ENCODE measurements at regions of chr9 and their contacts with region 1.

Region 1: DNA sequence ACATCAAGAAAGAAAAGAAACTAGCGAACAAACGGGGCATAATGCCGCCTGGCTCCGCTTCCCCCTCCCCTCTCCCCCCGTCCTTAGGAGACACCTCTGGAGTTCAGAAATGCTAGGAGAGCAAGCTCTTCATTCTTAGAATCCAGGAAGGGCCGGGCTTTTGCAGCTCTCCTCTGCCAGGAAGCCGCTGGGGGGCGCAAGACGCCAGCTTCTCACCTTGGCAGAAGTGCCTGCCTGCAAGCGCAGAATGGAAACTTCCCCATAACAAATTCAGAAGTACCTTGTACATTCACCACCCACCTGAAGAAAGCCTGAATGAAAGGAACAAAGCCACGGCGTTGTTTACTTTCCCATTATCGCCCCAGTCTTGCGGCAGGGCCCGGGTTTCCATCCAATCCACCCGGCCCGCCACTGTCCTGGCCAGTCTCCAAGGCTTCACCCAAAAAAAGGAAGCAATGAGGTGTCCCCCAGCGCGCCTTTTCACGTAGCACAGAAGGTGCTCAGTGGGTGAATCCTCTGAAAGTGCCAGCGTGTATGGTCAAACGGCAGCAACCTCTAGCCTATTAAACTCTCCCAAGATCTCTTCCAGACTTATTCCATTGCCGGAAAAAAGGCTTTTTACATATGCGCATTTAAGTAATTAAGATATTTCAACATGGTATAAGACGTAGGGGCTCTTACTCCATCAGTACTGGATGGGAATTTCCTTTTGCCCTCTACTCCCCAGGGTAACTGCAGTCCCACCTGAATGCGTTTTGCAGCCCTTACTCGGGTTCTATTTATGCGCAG is 1.6 kb upstream of the GADD45G start:
- DNase-seq: peak; percentile 84
- H3K4me3 ChIP-seq: no peak overlapping the region
- H3K27ac ChIP-seq: no peak overlapping the region
- H3K4me1 ChIP-seq: peaks cover 13% of the 10 kb centered on the region
- CTCF ChIP-seq: peak; percentile 93

Region 2: GRCh38 chr9:89437000-89437631 is 166.1 kb before region 1 on chr9:
- CTCF ChIA-PET with region 1: no interaction called
- POLR2A ChIA-PET with region 1: no interaction called
- intact Hi-C with region 1: no loop called
- DNase-seq: peak; percentile 74
- H3K4me3 ChIP-seq: no peak overlapping the region
- H3K27ac ChIP-seq: no peak overlapping the region
- H3K4me1 ChIP-seq: peaks cover 86% of the 10 kb centered on the region
- CTCF ChIP-seq: no peak

Region 3: DNA sequence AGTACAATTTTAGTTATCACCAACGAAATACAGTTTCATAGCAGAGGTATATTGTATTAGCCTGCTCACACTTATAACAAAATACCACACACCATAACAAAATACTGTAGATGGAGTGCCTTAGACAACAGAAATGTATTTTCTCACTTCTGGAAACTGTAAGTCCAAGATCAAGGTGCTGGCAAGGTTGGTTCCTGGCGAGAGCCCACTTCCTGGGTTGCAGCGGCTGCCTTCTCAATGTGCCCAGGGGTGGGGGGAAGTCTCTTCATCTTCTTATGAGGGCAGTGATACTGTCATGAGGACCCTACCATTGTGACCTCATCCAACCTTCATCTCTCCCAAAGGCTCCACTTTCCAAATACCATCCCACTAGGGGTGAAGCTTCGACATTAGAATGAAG is 28.9 kb before region 1 on chr9:
- CTCF ChIA-PET with region 1: no interaction called
- POLR2A ChIA-PET with region 1: no interaction called
- intact Hi-C with region 1: no loop called
- DNase-seq: no peak
- H3K4me3 ChIP-seq: no peak overlapping the region
- H3K27ac ChIP-seq: no peak overlapping the region
- H3K4me1 ChIP-seq: no peaks in the 10 kb centered on the region
- CTCF ChIP-seq: no peak

Region 4: DNA sequence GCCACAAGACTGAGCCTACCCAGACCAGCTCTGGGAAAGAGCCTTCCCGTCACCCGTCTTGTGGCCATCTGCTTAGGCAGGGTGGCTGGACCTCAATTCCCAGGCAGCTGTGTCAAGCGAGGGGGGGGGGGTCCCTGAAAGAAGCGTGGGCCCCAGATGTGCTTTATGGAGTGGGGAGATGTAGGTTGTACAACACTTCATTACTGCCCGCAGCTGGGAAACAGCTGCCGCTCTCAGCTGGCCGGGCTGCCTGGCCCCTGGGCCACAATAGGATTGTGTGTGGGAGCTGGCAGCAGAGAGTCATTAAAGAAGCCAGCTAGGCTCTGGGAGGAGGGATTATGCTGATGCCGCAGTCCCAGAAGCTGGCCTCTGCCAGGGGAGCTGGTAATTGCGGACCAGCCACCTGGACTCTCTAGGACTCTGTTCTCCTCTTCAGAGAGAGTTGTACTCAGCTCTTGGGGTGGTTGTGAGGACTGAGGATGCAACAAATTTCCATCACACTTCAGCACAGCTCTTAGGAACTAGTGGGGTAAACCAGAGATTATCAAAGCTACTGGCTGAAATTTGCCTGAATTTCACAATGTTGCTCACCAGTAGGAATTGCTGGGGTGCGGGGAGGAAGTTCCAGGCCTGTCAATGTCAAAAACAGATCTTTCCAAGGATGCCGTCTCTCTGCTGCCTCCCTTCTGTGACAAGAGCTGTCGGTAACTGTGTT is 147.1 kb after region 1 on chr9:
- CTCF ChIA-PET with region 1: no interaction called
- POLR2A ChIA-PET with region 1: no interaction called
- intact Hi-C with region 1: no loop called
- DNase-seq: no peak
- H3K4me3 ChIP-seq: no peak overlapping the region
- H3K27ac ChIP-seq: no peak overlapping the region
- H3K4me1 ChIP-seq: peaks cover 18% of the 10 kb centered on the region
- CTCF ChIP-seq: no peak

Region 5: GRCh38 chr9:89815903-89816573 is 212.9 kb after region 1 on chr9:
- CTCF ChIA-PET with region 1: interaction called, 3 read pairs
- POLR2A ChIA-PET with region 1: no interaction called
- intact Hi-C with region 1: loop called (anchors 5 kb)
- DNase-seq: peak; percentile 56
- H3K4me3 ChIP-seq: no peak overlapping the region
- H3K27ac ChIP-seq: no peak overlapping the region
- H3K4me1 ChIP-seq: peaks cover 23% of the 10 kb centered on the region
- CTCF ChIP-seq: no peak

Region 6: DNA sequence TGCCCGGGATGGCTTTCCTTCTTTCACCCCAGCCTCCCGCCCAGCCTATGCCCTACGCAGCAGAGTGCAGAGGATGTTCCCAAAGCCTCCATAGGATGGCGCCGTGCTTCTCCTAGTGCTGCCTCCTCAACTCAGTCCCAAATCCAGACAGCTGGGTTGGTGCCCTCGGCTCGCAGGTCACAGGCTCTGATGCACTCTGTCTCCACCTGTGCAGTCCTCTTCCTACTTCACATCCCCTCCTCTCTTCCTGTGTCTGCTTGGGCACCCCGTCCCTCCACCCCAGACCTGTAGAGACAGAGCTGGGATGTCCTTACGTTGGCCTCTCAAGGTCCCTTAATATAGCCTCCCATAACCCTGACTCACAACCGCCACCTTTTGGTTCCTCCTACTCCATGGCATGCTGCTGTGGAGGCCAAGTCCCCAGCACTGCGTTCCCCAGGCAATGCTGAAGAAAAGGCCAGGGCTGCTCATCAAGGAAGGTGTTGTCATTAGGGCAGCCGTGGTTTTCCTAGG is 316.1 kb after region 1 on chr9:
- CTCF ChIA-PET with region 1: no interaction called
- POLR2A ChIA-PET with region 1: no interaction called
- intact Hi-C with region 1: loop called (anchors 1 kb)
- DNase-seq: peak; percentile 40
- H3K4me3 ChIP-seq: no peak overlapping the region
- H3K27ac ChIP-seq: no peak overlapping the region
- H3K4me1 ChIP-seq: no peaks in the 10 kb centered on the region
- CTCF ChIP-seq: peak; percentile 57

Region 7: DNA sequence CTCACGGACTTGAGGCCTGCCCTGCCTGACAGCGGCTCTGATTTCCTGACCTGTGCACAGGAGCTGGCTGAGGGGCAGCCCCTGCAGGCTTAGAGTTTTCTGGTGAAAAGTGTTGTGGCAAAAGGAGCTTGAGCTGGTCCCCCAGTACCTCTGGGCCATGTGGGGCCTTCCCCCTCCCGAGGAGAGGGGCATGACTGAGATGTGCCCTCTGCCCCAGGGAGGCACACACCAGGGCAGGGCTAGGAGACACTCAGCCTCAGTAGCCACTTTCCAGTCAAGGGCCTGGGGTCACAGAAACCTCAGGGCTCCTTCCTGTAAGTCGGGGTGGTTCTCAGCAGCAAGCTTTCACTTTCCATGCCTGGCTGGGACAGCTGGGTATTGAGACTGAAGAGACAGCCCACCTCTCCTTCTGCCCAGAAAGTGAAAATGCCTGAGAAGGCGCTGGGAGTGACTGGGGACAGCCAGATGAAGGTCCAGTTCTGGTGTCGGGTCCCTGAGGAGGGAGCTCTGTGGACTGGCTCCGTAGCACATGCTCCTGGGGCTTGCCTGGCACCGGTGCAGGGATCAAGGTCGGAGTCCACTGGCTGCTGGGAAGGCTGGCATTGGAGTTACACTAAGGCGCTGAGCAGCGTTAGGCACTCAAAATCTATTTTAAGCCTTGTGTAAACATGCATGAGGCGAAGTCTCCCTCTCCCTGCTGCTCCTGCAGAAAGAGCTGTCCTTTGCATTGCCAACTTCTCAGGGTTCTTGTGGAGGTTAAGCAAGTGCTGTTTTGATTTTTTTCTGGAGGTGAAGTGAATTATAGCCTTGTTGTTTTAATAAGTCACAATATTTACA is 396.6 kb after region 1 on chr9:
- CTCF ChIA-PET with region 1: interaction called, 3 read pairs
- POLR2A ChIA-PET with region 1: no interaction called
- intact Hi-C with region 1: loop called (anchors 5 kb)
- DNase-seq: peak; percentile 69
- H3K4me3 ChIP-seq: peak overlapping the region; percentile 52
- H3K27ac ChIP-seq: no peak overlapping the region
- H3K4me1 ChIP-seq: peaks cover 33% of the 10 kb centered on the region
- CTCF ChIP-seq: no peak

Region 8: DNA sequence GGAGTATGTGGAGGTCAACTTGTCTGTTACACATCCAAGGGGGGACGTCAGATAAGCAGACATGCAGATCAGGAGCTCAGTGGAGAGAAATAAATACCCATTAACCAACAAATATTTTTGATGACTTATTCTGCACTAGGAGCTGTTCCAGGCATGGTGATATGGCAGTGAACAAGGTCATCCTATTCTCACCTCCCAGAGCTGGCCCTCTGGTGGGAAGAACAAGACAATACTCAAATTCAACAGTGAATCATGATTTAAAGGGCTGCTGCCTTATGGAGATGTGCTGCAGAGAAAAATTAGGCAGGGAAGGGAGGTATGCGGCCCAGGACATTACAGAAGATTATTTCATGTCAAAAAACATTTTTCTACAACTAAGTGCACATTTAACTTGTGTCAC is 1234.9 kb after region 1 on chr9:
- CTCF ChIA-PET with region 1: no interaction called
- POLR2A ChIA-PET with region 1: no interaction called
- intact Hi-C with region 1: no loop called
- DNase-seq: peak; percentile 31
- H3K4me3 ChIP-seq: no peak overlapping the region
- H3K27ac ChIP-seq: peak overlapping the region; percentile 23
- H3K4me1 ChIP-seq: peaks cover 81% of the 10 kb centered on the region
- CTCF ChIP-seq: peak; percentile 67

Measured in OCI-LY7 (cell line).